Gastrocnemius medialis (tissue), 4 donors: ENCODE measurements at regions of chr1 and their contacts with region 1.

Region 1: GRCh38 chr1:25695090-25695770 is 78.6 kb downstream of the MAN1C1 start:
- DNase-seq: peak; percentile 75 to 85
- ATAC-seq: peak; percentile 75 to 77
- H3K4me3 ChIP-seq: no peak overlapping the region
- H3K27ac ChIP-seq: peak overlapping the region; percentile 48 to 76 (median 70)
- H3K4me1 ChIP-seq: peaks cover 40 to 44% of the 10 kb centered on the region in 2 donors
- H3K27me3 ChIP-seq: no peaks in the 10 kb centered on the region
- CTCF ChIP-seq: peak in 1 of 5 experiments; percentile 20
- POLR2A ChIP-seq: no peak

Region 2: DNA sequence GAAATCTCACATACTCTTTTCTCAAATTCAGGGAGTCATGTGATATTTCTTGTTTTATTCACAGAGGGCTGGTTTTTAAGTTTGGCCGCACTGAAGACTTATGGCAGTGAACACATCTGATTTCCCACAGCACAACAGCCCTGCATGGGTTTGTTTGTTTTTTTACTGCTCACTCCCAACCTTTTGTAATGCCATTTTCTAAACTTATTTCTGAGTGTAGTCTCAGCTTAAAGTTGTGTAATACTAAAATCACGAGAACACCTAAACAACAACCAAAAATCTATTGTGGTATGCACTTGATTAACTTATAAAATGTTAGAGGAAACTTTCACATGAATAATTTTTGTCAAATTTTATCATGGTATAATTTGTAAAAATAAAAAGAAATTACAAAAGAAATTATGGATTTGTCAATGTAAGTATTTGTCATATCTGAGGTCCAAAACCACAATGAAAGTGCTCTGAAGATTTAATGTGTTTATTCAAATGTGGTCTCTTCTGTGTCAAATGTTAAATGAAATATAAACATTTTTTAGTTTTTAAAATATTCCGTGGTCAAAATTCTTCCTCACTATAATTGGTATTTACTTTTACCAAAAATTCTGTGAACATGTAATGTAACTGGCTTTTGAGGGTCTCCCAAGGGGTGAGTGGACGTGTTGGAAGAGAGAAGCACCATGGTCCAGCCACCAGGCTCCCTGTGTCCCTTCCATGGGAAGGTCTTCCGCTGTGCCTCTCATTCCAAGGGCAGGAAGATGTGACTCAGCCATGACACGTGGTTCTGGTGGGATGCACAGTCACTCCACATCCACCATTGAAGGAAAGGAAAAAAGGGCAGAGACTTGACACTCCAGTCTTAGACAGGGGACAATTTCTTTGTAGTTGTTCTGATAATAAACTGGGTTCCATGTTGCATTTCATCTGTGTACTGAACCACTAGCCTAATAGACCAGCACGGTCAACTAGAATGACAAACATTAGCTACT is 334.3 kb before region 1 on chr1:
- in situ Hi-C with region 1: no loop called
- intact Hi-C with region 1: no loop called
- DNase-seq: no peak
- ATAC-seq: no peak
- H3K4me3 ChIP-seq: no peak overlapping the region
- H3K27ac ChIP-seq: peak overlapping the region in 3 of 4 donors; percentile 20 to 55 (median 49)
- H3K4me1 ChIP-seq: peaks cover 0 to 9% of the 10 kb centered on the region in 2 donors
- H3K27me3 ChIP-seq: no peaks in the 10 kb centered on the region
- CTCF ChIP-seq: no peak
- POLR2A ChIP-seq: no peak

Region 3: DNA sequence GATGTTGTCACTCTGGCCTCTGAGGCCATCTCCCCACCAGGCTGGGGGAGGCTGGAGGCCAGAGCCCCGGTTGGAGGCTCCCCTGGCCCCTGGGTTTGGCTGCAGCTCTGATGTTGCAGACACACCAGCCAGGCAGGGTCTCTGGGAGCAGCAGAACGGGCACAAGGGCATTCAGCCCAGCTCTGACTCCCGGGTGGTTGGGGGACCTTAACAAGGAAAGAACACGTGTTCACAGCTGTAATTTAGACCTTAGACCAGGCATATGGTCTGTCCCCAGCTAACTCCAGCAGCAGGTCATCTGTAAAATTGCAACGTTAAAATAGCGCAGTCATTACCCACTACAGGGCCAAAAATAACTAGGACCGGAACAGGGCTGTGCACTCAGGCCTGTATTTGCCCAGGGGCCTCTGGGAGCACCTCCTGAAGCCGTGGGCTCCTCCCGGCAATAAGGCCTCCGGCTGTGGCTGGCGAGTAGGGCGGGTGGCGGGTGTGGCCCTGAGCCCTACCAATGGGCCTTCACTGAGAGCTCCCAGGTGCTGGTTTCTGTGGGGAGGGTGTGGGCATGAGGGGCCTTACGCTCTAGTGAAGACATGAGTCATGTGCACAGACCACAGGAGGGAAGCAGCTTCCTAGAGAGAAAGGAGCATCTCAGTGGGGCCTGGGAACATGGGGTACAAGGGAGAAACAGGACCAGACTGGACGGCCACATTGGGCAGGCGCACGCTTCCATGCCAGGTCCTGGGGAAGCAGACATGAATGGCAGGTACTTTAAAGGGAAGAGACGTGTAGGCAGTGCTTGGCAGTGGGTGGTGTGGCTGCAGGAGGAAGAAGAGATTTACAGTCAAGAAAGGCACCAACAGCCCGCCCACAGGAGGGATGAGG is 145.7 kb before region 1 on chr1:
- in situ Hi-C with region 1: no loop called
- intact Hi-C with region 1: loop called (anchors 5 kb)
- DNase-seq: peak in 1 of 2 donors; percentile 60
- ATAC-seq: peak; percentile 82 to 84
- H3K4me3 ChIP-seq: no peak overlapping the region
- H3K27ac ChIP-seq: peak overlapping the region; percentile 80 to 90 (median 81)
- H3K4me1 ChIP-seq: peaks cover 74 to 75% of the 10 kb centered on the region in 2 donors
- H3K27me3 ChIP-seq: no peaks in the 10 kb centered on the region
- CTCF ChIP-seq: no peak
- POLR2A ChIP-seq: peak; percentile 36

Region 4: GRCh38 chr1:25658791-25659431 is 36.3 kb before region 1 on chr1:
- in situ Hi-C with region 1: no loop called
- intact Hi-C with region 1: loop called (anchors 2 kb)
- DNase-seq: peak; percentile 74 to 91
- ATAC-seq: peak; percentile 98 to 100
- H3K4me3 ChIP-seq: no peak overlapping the region
- H3K27ac ChIP-seq: peak overlapping the region; percentile 52 to 69 (median 68)
- H3K4me1 ChIP-seq: peaks cover 23 to 29% of the 10 kb centered on the region in 2 donors
- H3K27me3 ChIP-seq: no peaks in the 10 kb centered on the region
- CTCF ChIP-seq: no peak
- POLR2A ChIP-seq: no peak

Region 5: GRCh38 chr1:25743826-25744581 is 48.8 kb after region 1 on chr1:
- in situ Hi-C with region 1: no loop called
- intact Hi-C with region 1: loop called (anchors 1 kb)
- DNase-seq: peak; percentile 73 to 86
- ATAC-seq: peak; percentile 86 to 88
- H3K4me3 ChIP-seq: no peak overlapping the region
- H3K27ac ChIP-seq: peak overlapping the region; percentile 90 to 95 (median 94)
- H3K4me1 ChIP-seq: peaks cover 31 to 32% of the 10 kb centered on the region in 2 donors
- H3K27me3 ChIP-seq: no peaks in the 10 kb centered on the region
- CTCF ChIP-seq: peak; percentile 42 to 65 (median 55)
- POLR2A ChIP-seq: no peak

Region 6: DNA sequence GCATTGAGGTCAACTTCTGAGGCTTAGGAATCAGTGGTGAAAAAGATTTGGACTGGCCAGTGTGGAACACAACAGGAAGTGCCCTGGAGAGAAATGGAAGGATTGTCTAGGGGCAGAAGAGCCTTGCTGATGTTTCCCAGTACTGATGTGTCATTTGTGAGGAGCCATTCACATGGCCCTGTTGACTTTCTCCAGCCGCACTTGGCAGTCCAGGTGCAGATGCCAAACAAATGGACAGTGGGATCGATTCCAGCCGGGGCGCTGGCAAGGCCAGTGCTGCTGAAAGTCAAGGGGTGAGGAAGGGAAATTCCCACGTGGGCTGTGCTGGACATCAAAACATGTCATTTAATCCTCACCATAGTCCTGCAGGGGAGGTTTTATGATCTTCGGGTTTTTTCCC is 377.1 kb after region 1 on chr1:
- in situ Hi-C with region 1: no loop called
- intact Hi-C with region 1: no loop called
- DNase-seq: peak; percentile 95 to 97
- ATAC-seq: peak; percentile 51 to 56
- H3K4me3 ChIP-seq: peak overlapping the region in 2 of 4 donors; percentile 29 to 30
- H3K27ac ChIP-seq: peak overlapping the region; percentile 88 to 96 (median 93)
- H3K4me1 ChIP-seq: peaks cover 48 to 72% of the 10 kb centered on the region in 2 donors
- H3K27me3 ChIP-seq: no peaks in the 10 kb centered on the region
- CTCF ChIP-seq: no peak
- POLR2A ChIP-seq: peak in 1 of 2 donors; percentile 59